Aorta (tissue), 5 donors: ENCODE measurements at regions of chr2 and their contacts with region 1.

Region 1: DNA sequence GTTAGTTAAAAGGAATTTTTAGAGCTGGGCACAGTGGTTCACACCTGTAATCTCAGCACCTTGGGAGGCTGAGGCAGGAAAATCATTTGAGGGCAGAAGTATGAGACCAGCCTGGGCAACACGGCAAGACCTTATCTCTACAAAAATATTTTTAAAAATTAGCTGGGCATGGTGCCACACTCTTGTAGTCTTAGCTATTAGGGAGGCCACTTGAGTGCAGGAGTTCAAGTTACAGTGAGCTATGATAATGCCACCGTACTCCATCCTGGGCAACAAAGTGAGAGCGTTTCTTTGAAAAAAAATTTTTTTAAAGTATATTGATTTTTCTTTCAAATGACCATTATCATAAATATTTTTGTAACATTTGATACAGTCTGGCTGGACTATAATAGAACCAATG is 93.6 kb upstream of the FAM117B start:
- DNase-seq: no peak
- ATAC-seq: peak; percentile 66
- H3K4me3 ChIP-seq: no peak overlapping the region
- H3K27ac ChIP-seq: no peak overlapping the region
- H3K4me1 ChIP-seq: no peaks in the 10 kb centered on the region
- H3K27me3 ChIP-seq: no peaks in the 10 kb centered on the region

Region 2: DNA sequence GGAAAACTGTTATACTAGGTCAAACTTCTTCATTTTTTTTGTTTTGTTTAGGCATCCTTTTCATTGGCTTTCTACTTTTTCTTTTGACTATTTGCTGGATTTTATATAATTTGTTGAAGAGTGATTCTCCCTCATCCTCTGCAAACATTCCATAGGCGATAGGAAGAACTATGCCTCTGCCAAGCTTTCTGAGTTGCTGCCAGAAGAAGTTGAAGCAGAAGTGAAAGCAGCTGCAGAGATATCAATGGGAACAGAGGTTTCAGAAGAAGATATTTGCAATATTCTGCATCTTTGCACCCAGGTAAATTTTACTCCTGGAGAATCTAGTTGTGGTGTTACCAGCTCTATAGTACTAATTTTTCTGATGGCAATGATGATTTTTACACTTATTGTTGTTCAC is 250.2 kb before region 1 on chr2:
- intact Hi-C with region 1: loop called in 1 of 2 experiments (anchors 5 kb)
- DNase-seq: no peak
- ATAC-seq: no peak
- H3K4me3 ChIP-seq: no peak overlapping the region
- H3K27ac ChIP-seq: no peak overlapping the region
- H3K4me1 ChIP-seq: no peaks in the 10 kb centered on the region
- H3K27me3 ChIP-seq: no peaks in the 10 kb centered on the region

Region 3: GRCh38 chr2:202387608-202388342 is 153.4 kb before region 1 on chr2:
- intact Hi-C with region 1: no loop called
- DNase-seq: no peak
- ATAC-seq: no peak
- H3K4me3 ChIP-seq: no peak overlapping the region
- H3K27ac ChIP-seq: no peak overlapping the region
- H3K4me1 ChIP-seq: no peaks in the 10 kb centered on the region
- H3K27me3 ChIP-seq: no peaks in the 10 kb centered on the region

Region 4: GRCh38 chr2:202510911-202511310 is 30.2 kb before region 1 on chr2:
- intact Hi-C with region 1: no loop called
- DNase-seq: no peak
- ATAC-seq: no peak
- H3K4me3 ChIP-seq: no peak overlapping the region
- H3K27ac ChIP-seq: no peak overlapping the region
- H3K4me1 ChIP-seq: no peaks in the 10 kb centered on the region
- H3K27me3 ChIP-seq: no peaks in the 10 kb centered on the region